PC-3 (cell line): ENCODE measurements at regions of chr7 and their contacts with region 1.

Region 1: DNA sequence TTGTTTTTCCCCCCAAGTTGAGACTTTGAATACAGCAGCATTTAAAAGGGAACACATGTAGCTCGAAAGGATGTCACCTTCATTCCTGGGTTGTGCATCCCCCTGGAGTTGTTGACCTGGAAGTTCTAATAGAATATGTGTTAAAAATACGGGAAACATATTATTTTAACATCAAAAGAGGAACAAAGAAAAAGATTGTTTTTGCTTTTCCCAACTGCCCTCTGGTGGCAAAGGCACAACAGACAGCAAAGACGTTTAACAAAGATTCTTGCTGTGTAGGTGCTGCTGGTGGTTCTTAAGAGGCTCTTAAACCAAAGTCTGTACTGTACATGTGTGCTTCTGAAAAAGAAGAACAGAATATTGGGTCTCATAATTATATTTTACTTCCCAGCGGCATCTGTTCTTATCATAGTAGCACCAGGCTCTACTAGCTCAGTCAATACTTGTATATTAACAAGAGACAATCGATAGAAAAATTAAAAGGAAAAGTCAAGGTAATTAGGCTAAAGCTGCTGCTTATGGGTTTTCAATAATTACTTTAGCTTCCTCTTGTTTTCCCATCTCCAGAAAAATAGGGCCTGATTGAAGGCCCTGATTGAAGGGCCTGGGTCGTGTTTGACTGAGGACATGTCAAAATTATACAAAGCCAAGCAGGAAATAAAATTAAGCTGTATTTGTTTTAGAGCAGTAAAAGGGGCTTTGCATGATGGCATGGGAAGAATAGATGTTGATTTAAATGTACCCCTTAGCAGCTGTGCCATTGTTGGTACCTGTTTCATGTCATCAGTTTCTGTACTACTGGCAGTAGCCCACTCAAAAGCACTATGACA is 384.2 kb upstream of the LRGUK start:
- DNase-seq: peak; percentile 42
- ATAC-seq: peak; percentile 44; the same call in 1 of the 2 replicates
- H3K4me3 ChIP-seq: no peak overlapping the region
- H3K27ac ChIP-seq: no peak overlapping the region
- H3K4me1 ChIP-seq: peaks cover 5% of the 10 kb centered on the region; the same call in 1 of the 2 replicates
- H3K27me3 ChIP-seq: no peaks in the 10 kb centered on the region
- CTCF ChIP-seq: peak; percentile 77

Region 2: GRCh38 chr7:133645884-133646391 is 97.0 kb before region 1 on chr7:
- CTCF ChIA-PET with region 1: no interaction called
- POLR2A ChIA-PET with region 1: no interaction called
- intact Hi-C with region 1: loop called (anchors 5 kb)
- DNase-seq: peak; percentile 17
- ATAC-seq: peak; percentile 53
- H3K4me3 ChIP-seq: no peak overlapping the region
- H3K27ac ChIP-seq: no peak overlapping the region
- H3K4me1 ChIP-seq: peaks cover 3% of the 10 kb centered on the region; the same call in 1 of the 2 replicates
- H3K27me3 ChIP-seq: no peaks in the 10 kb centered on the region
- CTCF ChIP-seq: no peak